ENCODE measurements at regions of chr11 and their contacts with region 1.

Region 1: GRCh38 chr11:94988748-94989147 is 15.2 kb downstream of the KDM4D start:
- DNase-seq: no peak
- H3K4me3 Mint-ChIP-seq: no peak overlapping the region
- H3K27ac Mint-ChIP-seq: no peak overlapping the region
- H3K4me1 Mint-ChIP-seq: no peaks in the 10 kb centered on the region
- H3K27me3 Mint-ChIP-seq: peaks cover 14% of the 10 kb centered on the region
- CTCF ChIP-seq: no peak

Region 2: GRCh38 chr11:95045812-95046211 is 57.1 kb after region 1 on chr11:
- CTCF ChIA-PET with region 1: no interaction called
- intact Hi-C with region 1: loop called (anchors 5 kb)
- DNase-seq: no peak
- H3K4me3 Mint-ChIP-seq: no peak overlapping the region
- H3K27ac Mint-ChIP-seq: no peak overlapping the region
- H3K4me1 Mint-ChIP-seq: no peaks in the 10 kb centered on the region
- H3K27me3 Mint-ChIP-seq: peaks cover 29% of the 10 kb centered on the region
- CTCF ChIP-seq: no peak